CD4-positive, alpha-beta memory T cell (primary cell): ENCODE measurements at regions of chr17 and their contacts with region 1.

Region 1: DNA sequence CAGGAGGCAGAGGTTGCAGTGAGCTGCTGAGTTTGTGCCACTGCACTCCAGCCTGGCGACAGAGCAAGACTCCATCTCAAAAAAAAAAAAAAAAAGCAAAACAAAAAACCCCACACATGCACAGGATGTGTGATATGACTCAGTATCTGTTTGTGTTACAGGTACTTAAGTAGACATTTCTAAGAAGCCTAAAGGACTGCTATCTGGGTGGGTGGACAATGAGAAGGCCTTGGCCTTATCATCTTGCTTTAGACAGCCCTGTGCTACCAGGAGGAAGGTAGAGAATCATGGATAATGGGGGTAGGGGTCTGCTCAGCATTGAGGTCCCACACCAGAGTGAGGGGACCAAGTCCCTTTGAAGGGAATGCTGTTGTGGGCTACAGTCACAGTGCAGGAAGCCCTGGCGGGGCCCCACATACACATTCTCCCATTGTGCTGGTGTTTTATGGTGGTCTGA is 26.7 kb downstream of the PLD6 start:
- DNase-seq: peak in 4 of 5 donors; percentile 51 to 62 (median 54)
- H3K4me3 ChIP-seq: peak overlapping the region; percentile 4 to 42
- H3K4me3 Mint-ChIP-seq: peak overlapping the region; percentile 84 to 95 (median 86)
- H3K27ac ChIP-seq: peak overlapping the region; percentile 71
- H3K27ac Mint-ChIP-seq: peak overlapping the region; percentile 96 to 98 (median 97)
- H3K4me1 ChIP-seq: peaks cover 99% of the 10 kb centered on the region
- H3K4me1 Mint-ChIP-seq: peaks cover 57 to 96% (median 81%) of the 10 kb centered on the region in 4 donors
- H3K27me3 ChIP-seq: no peaks in the 10 kb centered on the region
- H3K27me3 Mint-ChIP-seq: no peaks in the 10 kb centered on the region

Region 2: DNA sequence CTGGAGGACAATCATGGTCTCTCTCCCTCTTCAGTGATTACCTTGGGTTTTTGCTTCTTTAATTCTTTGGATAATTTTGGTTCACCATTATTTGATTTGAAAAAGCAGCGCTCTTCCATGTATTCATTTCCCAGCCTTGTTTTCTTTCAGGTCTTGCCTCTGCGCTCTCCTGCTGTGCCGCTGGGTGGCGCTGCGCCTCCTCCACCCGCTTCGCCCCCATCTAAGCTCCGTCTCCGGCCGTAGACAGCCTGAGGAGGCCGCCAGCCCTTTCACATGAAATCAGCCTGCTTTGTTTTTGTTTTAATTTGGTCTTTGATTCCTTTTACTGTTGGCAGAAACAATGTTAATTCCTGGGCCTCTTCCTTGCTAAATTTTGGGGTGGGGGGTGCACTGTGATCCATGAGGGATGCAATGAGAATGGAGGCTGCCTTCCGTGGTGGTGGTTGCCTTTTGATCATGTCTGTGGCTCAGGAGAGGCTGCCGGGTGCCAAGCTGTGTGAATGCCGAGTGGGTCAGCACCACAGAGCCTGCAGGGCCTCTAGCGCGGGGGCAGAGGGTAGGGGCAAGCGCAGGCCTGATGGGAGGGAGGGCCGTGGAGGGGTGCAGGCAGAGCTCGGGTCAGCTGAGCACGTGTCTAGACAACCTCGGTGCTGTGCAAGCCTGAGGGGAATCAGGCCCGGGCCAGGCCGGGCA is 37.4 kb before region 1 on chr17:
- CTCF ChIA-PET with region 1: interaction called, 9 read pairs
- POLR2A ChIA-PET with region 1: interaction called, 10 read pairs
- intact Hi-C with region 1: no loop called
- DNase-seq: peak; percentile 54 to 65 (median 56)
- H3K4me3 ChIP-seq: no peak overlapping the region
- H3K4me3 Mint-ChIP-seq: peak overlapping the region in 4 of 8 donors; percentile 15 to 42 (median 36)
- H3K27ac ChIP-seq: no peak overlapping the region
- H3K27ac Mint-ChIP-seq: peak overlapping the region; percentile 22 to 94 (median 85)
- H3K4me1 ChIP-seq: peaks cover 9% of the 10 kb centered on the region
- H3K4me1 Mint-ChIP-seq: peaks cover 9 to 18% (median 9%) of the 10 kb centered on the region in 4 donors
- H3K27me3 ChIP-seq: no peaks in the 10 kb centered on the region
- H3K27me3 Mint-ChIP-seq: no peaks in the 10 kb centered on the region

Region 3: DNA sequence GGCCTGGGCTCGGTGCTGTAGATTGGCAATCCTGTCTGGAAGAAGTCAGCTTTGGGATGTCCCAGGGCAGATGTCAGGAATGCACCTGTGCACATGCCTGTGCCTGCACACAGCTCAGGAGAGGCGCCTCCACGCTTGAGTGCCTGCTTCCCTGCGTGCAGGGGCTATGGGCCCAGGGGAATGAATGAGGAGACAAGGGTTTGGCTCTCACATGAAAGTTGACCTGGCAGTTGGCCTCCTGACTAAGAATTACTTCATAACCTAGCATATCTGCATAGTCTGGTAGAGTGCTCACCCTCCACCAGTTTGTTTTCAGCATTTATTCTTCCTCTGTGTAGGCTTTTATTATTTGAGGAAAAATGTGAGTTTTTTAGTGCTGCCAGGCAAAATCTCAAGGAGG is 23.3 kb before region 1 on chr17:
- CTCF ChIA-PET with region 1: interaction called, 6 read pairs
- POLR2A ChIA-PET with region 1: interaction called, 11 read pairs
- intact Hi-C with region 1: loop called (anchors 2 kb)
- DNase-seq: no peak
- H3K4me3 ChIP-seq: no peak overlapping the region
- H3K4me3 Mint-ChIP-seq: no peak overlapping the region
- H3K27ac ChIP-seq: no peak overlapping the region
- H3K27ac Mint-ChIP-seq: peak overlapping the region in 3 of 7 donors; percentile 61 to 94 (median 94)
- H3K4me1 ChIP-seq: peaks cover 52% of the 10 kb centered on the region
- H3K4me1 Mint-ChIP-seq: peaks cover 32 to 56% (median 44%) of the 10 kb centered on the region in 4 donors
- H3K27me3 ChIP-seq: no peaks in the 10 kb centered on the region
- H3K27me3 Mint-ChIP-seq: no peaks in the 10 kb centered on the region

Region 4: GRCh38 chr17:17191346-17191792 is 12.0 kb after region 1 on chr17:
- CTCF ChIA-PET with region 1: interaction called, 5 read pairs
- POLR2A ChIA-PET with region 1: interaction called, 15 read pairs
- intact Hi-C with region 1: no loop called
- DNase-seq: no peak
- H3K4me3 ChIP-seq: no peak overlapping the region
- H3K4me3 Mint-ChIP-seq: no peak overlapping the region
- H3K27ac ChIP-seq: no peak overlapping the region
- H3K27ac Mint-ChIP-seq: peak overlapping the region in 4 of 7 donors; percentile 19 to 47 (median 30)
- H3K4me1 ChIP-seq: peaks cover 13% of the 10 kb centered on the region
- H3K4me1 Mint-ChIP-seq: peaks cover 6 to 32% (median 8%) of the 10 kb centered on the region in 4 donors
- H3K27me3 ChIP-seq: no peaks in the 10 kb centered on the region
- H3K27me3 Mint-ChIP-seq: no peaks in the 10 kb centered on the region

Region 5: DNA sequence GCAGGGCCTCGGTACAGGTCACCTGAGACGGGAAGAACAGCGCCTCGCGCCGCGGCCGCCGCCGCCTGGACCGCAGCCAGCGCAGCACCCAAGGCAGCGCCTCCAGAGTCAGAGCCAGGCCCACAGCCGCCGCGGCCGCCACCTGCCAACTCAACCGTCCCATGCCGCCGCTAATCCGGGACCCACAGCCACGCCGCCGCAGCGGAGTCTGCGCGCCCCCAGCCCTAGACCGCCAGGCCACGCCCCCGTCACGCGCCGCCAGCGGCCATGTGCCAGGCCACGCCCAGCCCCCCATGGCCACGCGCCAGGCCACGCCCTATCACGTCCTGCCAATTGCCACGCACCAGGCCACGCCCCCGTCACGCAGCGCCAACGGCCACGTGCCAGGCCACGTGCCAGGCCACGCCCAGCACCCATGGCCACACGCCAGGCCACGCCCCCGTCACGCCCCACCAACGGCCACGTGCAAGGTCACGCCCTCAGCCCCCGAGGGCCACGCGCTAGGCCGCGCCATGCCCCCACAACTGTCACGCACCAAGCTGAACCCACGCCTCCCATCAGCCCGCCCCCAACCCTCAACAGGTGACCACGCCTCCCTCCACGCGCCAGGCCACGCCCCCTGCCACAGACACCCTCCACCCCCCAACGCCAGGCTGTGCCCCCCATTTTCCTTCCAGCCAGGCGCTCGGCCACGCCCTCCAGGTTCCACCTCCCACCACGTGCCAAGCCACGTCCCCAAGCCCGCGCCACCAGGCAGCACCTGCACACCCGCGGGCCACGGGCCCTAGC is 26.9 kb after region 1 on chr17 and contains the start of gene PLD6:
- CTCF ChIA-PET with region 1: interaction called, 4 read pairs
- POLR2A ChIA-PET with region 1: interaction called, 131 read pairs
- intact Hi-C with region 1: loop called (anchors 1 kb)
- DNase-seq: peak; percentile 94 to 95 (median 95)
- H3K4me3 ChIP-seq: peak within 1 kb of the TSS; percentile 61 to 72
- H3K4me3 Mint-ChIP-seq: peak within 1 kb of the TSS; percentile 85 to 94 (median 90)
- H3K27ac ChIP-seq: peak within 1 kb of the TSS; percentile 72
- H3K27ac Mint-ChIP-seq: peak within 1 kb of the TSS; percentile 91 to 97 (median 96)
- H3K4me1 ChIP-seq: peaks cover 28% of the 10 kb centered on the region
- H3K4me1 Mint-ChIP-seq: peaks cover 14 to 44% (median 31%) of the 10 kb centered on the region in 4 donors
- H3K27me3 ChIP-seq: no peaks in the 10 kb centered on the region
- H3K27me3 Mint-ChIP-seq: no peaks in the 10 kb centered on the region
- total RNA-seq, gene PLD6: 12.8 to 13.9 TPM

Region 6: DNA sequence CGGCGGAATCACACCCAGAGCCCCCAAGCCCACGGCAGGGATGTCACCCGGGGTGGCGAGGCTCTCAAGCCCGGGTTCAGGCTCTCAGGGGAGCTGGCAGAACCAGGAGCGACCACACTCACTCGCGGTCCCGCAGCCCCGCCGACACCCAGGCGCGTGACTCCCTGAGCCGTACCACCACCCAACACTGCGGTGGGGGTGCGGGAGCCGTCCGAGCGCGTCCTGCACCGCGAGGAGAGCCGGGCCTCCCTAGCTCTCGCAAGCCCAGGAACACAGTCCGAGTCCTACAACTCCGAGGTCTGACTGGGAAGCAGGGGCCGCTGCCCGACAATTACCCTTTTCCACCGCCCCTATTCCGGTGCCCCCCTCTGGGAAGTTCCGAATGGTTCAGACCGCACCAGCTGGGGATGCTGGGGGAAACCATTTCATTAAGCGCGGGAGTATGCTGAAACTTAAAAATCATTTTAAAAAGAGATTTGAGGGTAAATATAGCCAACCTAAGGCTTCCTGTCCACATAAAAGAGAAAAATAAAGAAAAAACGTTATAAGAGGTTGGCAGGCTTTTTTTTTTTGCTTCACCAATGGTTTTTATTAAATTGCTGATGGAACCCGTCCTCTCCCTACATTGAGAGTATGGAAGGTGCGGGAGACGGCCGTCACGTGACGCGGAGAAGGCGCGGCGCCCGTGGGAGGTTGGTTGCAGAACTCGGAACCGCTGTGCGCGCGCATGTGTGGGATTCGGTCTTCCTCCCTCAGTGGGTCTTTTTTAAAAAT is 57.8 kb after region 1 on chr17 and contains the start of gene FLCN:
- CTCF ChIA-PET with region 1: no interaction called
- POLR2A ChIA-PET with region 1: interaction called, 39 read pairs
- intact Hi-C with region 1: loop called (anchors 1 kb)
- DNase-seq: peak; percentile 91 to 95 (median 92)
- H3K4me3 ChIP-seq: peak within 1 kb of the TSS; percentile 79 to 82
- H3K4me3 Mint-ChIP-seq: peak within 1 kb of the TSS; percentile 90 to 97 (median 95)
- H3K27ac ChIP-seq: peak within 1 kb of the TSS; percentile 94
- H3K27ac Mint-ChIP-seq: peak within 1 kb of the TSS; percentile 91 to 99 (median 99)
- H3K4me1 ChIP-seq: peaks cover 25% of the 10 kb centered on the region
- H3K4me1 Mint-ChIP-seq: peaks cover 15 to 35% (median 23%) of the 10 kb centered on the region in 4 donors
- H3K27me3 ChIP-seq: no peaks in the 10 kb centered on the region
- H3K27me3 Mint-ChIP-seq: no peaks in the 10 kb centered on the region
- total RNA-seq, gene FLCN: 94.4 to 95.0 TPM

Region 7: GRCh38 chr17:17252149-17252661 is 72.8 kb after region 1 on chr17:
- CTCF ChIA-PET with region 1: no interaction called
- POLR2A ChIA-PET with region 1: no interaction called
- intact Hi-C with region 1: no loop called
- DNase-seq: no peak
- H3K4me3 ChIP-seq: no peak overlapping the region
- H3K4me3 Mint-ChIP-seq: no peak overlapping the region
- H3K27ac ChIP-seq: no peak overlapping the region
- H3K27ac Mint-ChIP-seq: peak overlapping the region in 5 of 7 donors; percentile 19 to 81 (median 65)
- H3K4me1 ChIP-seq: peaks cover 6% of the 10 kb centered on the region
- H3K4me1 Mint-ChIP-seq: peaks cover 5 to 8% (median 7%) of the 10 kb centered on the region in 4 donors
- H3K27me3 ChIP-seq: no peaks in the 10 kb centered on the region
- H3K27me3 Mint-ChIP-seq: no peaks in the 10 kb centered on the region

Region 8: DNA sequence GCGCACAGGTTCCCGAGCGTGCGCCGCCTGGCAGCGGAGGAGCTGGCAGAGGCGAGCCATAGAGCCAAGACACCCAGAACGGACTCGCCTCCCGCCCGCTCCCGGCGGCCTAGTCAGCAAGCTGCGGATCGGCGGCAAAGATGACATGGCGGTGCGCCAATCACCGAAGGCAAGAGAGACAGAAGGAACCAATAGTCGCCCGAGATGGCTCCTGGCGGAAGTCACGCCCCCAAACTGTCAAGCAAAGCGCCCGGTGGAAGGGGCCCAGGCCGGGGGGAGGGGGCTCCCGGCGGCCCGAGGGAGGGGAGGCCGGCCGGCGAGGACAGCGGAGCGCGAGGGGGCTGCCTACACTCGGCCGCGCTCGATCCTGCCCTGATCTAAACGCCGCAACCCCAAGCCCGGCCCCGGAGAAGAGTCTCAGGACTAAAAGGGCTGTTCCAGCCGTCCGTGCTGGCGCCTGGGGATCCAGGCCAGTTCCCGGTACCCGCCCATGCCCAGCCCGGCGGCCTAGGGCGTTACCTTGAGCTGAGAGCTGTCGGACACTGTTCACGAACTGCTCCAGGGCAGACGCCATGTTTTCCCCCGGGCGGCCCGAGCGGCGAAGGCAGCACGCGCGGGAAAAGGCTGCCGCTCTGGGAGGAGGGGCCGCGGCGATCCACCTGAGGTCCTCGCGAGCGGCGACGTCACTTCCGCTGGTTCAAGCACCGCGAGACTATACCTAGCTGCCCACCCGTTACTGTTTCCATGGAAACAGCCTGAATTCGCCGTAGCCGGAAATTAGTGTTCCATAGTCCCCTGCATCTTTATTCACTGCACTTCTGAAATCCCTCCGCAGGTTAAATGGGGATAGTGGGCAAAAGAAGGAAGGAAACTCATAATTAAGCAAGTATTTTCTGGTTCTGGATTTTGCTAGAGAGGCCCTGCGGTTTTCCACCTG is 101.5 kb after region 1 on chr17 and contains the start of gene COPS3:
- CTCF ChIA-PET with region 1: no interaction called
- POLR2A ChIA-PET with region 1: interaction called, 4 read pairs
- intact Hi-C with region 1: loop called (anchors 5 kb)
- DNase-seq: peak; percentile 96 to 98 (median 97)
- H3K4me3 ChIP-seq: peak within 1 kb of the TSS; percentile 62 to 99
- H3K4me3 Mint-ChIP-seq: peak within 1 kb of the TSS; percentile 90 to 96 (median 94)
- H3K27ac ChIP-seq: peak within 1 kb of the TSS; percentile 89
- H3K27ac Mint-ChIP-seq: peak within 1 kb of the TSS; percentile 93 to 98 (median 96)
- H3K4me1 ChIP-seq: peaks cover 33% of the 10 kb centered on the region
- H3K4me1 Mint-ChIP-seq: peaks cover 24 to 55% (median 40%) of the 10 kb centered on the region in 4 donors
- H3K27me3 ChIP-seq: no peaks in the 10 kb centered on the region
- H3K27me3 Mint-ChIP-seq: no peaks in the 10 kb centered on the region
- total RNA-seq, gene COPS3: 45.4 to 60.5 TPM